ENCODE measurements at regions of chr9 and their contacts with region 1.

Region 1: GRCh38 chr9:130701056-130702022 is 7.8 kb downstream of the EXOSC2 start:
- DNase-seq: peak; percentile 88
- ATAC-seq: peak; percentile 92 to 96

Region 2: DNA sequence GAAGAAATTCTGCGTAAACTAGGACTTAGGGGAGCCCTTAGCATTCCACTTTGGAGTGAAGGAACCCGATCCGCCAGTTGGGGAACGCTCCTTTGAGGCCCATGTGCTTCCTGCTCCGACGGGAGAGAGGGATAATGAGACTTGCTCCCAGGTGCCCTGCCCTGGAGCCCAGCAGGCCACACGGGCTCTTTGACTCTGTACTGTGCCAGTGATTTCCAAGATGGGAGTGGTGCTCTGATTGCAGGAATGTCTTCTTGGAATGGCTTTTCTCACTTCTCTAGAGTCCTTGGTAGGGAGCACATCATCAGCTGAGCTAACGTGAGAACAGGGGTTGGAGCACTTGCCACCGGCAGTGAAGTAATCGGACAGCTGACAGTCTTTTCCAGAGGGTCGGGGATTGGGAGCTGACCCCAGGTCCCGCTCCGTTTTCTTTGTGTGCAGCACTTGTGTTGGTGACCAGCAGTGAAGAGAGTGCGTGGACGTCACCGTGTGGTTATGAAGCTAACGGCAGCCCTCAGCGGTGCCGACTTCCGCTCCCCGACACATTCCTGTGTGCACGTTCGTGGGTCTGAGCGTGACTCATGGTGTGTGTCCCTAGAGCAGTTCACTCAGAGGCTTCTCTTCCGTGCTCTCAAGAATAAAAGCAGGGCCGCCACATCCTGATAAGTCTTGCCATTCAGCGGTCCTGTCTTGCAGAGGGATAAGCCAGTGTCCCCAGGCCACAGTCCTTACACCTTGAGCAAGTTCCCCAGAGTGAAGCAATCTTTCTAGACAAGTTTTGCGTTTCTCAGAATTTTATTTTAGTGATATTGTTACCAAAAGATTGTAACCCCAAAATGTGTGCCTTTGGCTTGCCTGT is 159.3 kb after region 1 on chr9:
- intact Hi-C with region 1: loop called (anchors 2 to 5 kb)
- DNase-seq: peak; percentile 92
- ATAC-seq: peak; percentile 90 to 95